Lower lobe of right lung (tissue), 2 donors: ENCODE measurements at regions of chr7 and their contacts with region 1.

Region 1: GRCh38 chr7:121076350-121077164 is 88.0 kb downstream of the CPED1 start:
- DNase-seq: no peak
- ATAC-seq: no peak
- H3K4me3 ChIP-seq: no peak overlapping the region
- H3K27ac ChIP-seq: no peak overlapping the region
- H3K4me1 ChIP-seq: no peaks in the 10 kb centered on the region
- H3K27me3 ChIP-seq: no peaks in the 10 kb centered on the region
- CTCF ChIP-seq: no peak

Region 2: DNA sequence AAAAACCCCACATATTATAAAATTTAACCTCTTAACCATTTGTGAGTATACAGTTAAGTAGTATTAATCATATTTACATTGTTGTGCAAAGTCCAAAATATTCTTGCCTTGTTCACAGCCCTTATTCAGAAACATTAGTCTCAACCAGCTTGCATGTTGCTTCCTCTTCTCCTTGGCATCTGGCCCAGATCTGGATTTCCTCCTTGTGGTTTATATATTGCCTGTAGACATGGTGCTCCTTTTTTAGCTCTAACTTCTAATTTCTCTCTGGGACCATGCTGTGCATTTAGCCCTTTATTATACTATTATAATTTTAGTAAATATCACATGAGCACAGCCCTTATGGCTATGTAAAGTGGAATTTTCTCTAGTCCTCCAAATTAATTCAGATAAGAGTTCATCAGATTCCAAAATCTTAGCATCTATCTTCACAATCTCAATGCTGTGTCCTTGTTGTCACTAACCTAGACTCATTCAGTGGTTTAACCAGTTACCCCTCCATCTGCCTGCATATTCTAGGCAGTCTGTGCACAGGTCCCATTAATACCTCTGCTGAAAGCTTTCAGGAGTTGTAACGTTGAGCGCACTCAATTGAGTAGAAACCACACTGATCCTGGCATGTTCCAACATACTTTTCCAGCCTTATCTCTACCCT is 80.1 kb before region 1 on chr7:
- intact Hi-C with region 1: loop called (anchors 10 kb)
- DNase-seq: peak; percentile 48
- ATAC-seq: peak; percentile 82 to 84
- H3K4me3 ChIP-seq: no peak overlapping the region
- H3K27ac ChIP-seq: no peak overlapping the region
- H3K4me1 ChIP-seq: peaks cover 50% of the 10 kb centered on the region
- H3K27me3 ChIP-seq: no peaks in the 10 kb centered on the region
- CTCF ChIP-seq: no peak